Activated CD4-positive, alpha-beta memory T cell treated with anti-CD3 and anti-CD28 coated beads for 36 hours (primary cell): ENCODE measurements at regions of chr7 and their contacts with region 1.

Region 1: DNA sequence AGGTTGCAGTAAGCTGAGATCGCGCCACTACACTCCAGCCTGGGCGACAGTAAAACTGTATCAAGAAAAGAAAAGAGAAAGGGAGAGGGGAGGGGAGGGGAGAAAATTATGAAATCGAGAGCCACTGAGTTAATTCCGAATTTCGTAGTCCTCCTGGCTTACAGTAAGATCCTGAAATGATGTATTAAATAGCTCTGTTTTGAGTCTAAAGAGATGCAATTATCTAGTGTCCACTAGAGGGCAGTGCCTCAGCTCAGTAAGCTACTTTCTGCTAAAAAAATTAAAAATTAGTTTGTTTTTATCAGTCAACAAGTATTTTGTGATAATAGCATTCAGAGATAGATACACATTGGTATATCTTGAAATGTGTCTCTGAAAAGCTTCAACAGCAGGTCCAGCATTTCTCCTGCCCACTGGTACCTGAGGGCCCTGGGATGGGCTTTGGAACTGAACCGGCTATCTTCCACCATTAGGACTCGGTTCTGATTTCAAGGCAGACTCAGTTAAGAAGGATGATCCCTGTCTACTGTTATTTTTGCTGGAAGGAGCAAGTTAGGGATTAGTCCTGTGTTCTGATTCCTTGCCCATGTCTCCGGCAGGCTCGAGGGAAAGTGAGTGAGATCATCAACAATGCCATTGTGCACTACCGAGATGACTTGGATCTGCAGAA is 19.5 kb downstream of the TSPAN33 start:
- DNase-seq: no peak
- H3K4me3 Mint-ChIP-seq: no peak overlapping the region
- H3K27ac Mint-ChIP-seq: no peak overlapping the region
- H3K4me1 Mint-ChIP-seq: peaks cover 7% of the 10 kb centered on the region
- H3K27me3 Mint-ChIP-seq: peaks cover 14% of the 10 kb centered on the region

Region 2: GRCh38 chr7:128281605-128282380 is 882.2 kb before region 1 on chr7:
- CTCF ChIA-PET with region 1: no interaction called
- POLR2A ChIA-PET with region 1: no interaction called
- intact Hi-C with region 1: no loop called
- DNase-seq: no peak
- H3K4me3 Mint-ChIP-seq: no peak overlapping the region
- H3K27ac Mint-ChIP-seq: no peak overlapping the region
- H3K4me1 Mint-ChIP-seq: no peaks in the 10 kb centered on the region
- H3K27me3 Mint-ChIP-seq: no peaks in the 10 kb centered on the region

Region 3: GRCh38 chr7:129066290-129067131 is 97.5 kb before region 1 on chr7:
- CTCF ChIA-PET with region 1: no interaction called
- POLR2A ChIA-PET with region 1: no interaction called
- intact Hi-C with region 1: no loop called
- DNase-seq: no peak
- H3K4me3 Mint-ChIP-seq: no peak overlapping the region
- H3K27ac Mint-ChIP-seq: no peak overlapping the region
- H3K4me1 Mint-ChIP-seq: no peaks in the 10 kb centered on the region
- H3K27me3 Mint-ChIP-seq: peaks cover 5% of the 10 kb centered on the region

Region 4: DNA sequence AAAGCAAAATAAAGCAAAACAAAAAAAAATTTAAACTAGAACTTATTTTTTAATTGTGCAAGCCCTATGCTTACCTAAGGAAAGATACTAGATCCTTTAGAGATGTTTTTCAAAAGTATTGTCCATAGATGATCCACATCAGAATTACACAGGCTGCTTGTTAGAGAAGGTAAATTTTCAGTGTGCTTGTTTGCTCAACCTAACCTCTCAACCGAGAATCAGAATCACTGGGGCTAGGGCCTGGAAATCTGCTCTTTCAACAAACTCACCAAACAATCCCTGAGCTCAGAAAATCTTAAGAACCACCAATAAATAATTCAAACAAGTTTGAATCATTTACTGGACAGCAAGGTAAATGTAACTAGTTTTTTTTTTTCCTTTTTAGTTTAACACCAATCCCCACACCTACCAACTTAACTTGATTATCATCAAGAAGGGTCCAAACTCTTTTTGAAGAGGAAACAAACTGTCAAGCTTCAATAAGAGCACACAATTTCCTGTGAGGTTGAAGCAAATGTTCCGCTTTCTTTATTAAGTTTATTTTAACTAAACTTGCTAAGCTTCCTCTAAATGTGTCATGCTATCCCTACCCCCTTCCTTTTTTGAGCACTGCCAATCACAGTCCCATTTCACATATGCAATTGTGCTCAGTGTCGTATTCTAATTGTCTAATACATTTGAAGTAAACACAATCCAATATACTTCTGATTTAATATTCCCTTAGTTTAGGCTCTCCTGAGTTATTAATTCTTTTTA is 26.9 kb before region 1 on chr7:
- CTCF ChIA-PET with region 1: interaction called, 10 read pairs
- POLR2A ChIA-PET with region 1: no interaction called
- intact Hi-C with region 1: no loop called
- DNase-seq: no peak
- H3K4me3 Mint-ChIP-seq: no peak overlapping the region
- H3K27ac Mint-ChIP-seq: peak overlapping the region; percentile 82
- H3K4me1 Mint-ChIP-seq: peaks cover 23% of the 10 kb centered on the region
- H3K27me3 Mint-ChIP-seq: no peaks in the 10 kb centered on the region

Region 5: DNA sequence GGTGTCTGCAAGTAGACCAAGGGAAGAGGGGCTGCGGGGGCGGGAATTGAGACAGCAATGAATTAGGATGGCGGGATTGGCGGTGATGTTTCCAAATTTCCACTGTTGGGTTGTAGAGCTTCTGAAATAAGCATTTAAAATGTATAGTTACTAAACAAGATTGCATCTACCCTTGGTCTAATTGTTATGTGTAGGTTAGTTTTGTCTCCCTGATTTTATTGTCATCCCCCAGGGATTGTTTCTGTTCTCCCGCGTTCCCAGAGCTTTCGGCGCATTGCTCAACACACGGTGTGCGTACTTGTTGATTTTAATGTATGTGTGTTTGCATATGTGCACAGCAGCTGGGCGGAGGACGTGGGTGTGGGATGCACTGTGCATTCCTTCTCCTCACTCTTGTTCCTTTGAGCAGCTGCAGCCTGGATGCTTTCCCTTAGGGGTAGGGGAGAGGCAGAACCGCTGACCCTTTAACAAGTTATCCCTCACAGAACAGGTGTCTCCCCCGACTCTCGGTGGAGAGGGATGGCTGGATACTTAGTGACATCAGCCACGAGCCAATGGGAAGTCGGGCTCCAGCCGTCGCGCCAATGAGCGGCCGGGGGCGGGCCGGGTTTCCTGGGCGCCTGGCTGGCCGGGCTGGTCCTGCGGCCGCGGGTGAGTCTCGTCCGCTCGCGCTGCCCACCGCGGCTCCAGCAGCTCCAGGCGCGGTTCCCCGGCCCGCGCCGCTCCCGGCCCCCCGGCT is 19.7 kb before region 1 on chr7 and contains the start of gene TSPAN33:
- CTCF ChIA-PET with region 1: interaction called, 24 read pairs
- POLR2A ChIA-PET with region 1: no interaction called
- intact Hi-C with region 1: no loop called
- DNase-seq: peak; percentile 78
- H3K4me3 Mint-ChIP-seq: peak within 1 kb of the TSS; percentile 87
- H3K27ac Mint-ChIP-seq: no peak within 1 kb of the TSS
- H3K4me1 Mint-ChIP-seq: peaks cover 11% of the 10 kb centered on the region
- H3K27me3 Mint-ChIP-seq: peaks cover 26% of the 10 kb centered on the region
- total RNA-seq, gene TSPAN33: 3.3 to 4.1 TPM

Region 6: DNA sequence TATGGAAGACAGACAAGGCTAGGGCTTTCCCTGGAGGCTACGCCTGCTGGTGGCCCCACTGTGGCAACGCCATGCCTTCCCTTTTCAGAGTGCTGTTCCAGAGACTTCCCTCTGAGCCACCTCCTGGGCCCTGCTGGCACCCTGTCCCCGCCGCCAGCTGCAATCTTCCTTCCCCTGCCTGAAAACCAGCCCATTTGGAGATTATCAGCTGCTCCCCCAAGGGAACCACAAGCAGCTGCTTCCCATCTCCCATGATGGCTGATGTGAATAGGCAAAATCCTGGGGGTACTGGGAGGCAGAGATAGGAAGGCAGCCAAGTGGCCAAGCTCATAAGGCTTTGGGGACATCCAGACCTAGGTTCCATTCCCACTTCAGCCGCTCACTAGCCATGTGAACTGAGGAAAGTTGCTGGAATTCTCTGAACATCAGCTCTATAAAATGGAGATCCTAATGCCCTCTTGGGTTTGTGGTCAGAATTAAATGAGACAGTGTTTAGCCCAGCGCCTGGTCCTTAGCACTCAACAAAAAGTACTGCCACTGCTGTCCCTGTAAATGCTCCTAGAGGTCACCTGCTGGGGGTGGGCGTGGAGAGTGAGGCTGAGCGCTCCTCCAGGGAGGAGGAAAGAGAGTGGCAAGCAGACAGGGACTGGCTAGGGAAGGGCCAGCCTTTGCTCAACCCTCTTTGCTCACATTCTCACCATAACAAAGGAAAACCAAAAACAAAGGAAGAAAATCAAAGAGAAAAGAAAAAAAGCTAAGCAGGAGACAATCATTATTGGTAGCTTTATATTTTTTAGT is 13.6 kb before region 1 on chr7:
- CTCF ChIA-PET with region 1: interaction called, 24 read pairs
- POLR2A ChIA-PET with region 1: no interaction called
- intact Hi-C with region 1: no loop called
- DNase-seq: no peak
- H3K4me3 Mint-ChIP-seq: no peak overlapping the region
- H3K27ac Mint-ChIP-seq: no peak overlapping the region
- H3K4me1 Mint-ChIP-seq: no peaks in the 10 kb centered on the region
- H3K27me3 Mint-ChIP-seq: peaks cover 13% of the 10 kb centered on the region

Region 7: DNA sequence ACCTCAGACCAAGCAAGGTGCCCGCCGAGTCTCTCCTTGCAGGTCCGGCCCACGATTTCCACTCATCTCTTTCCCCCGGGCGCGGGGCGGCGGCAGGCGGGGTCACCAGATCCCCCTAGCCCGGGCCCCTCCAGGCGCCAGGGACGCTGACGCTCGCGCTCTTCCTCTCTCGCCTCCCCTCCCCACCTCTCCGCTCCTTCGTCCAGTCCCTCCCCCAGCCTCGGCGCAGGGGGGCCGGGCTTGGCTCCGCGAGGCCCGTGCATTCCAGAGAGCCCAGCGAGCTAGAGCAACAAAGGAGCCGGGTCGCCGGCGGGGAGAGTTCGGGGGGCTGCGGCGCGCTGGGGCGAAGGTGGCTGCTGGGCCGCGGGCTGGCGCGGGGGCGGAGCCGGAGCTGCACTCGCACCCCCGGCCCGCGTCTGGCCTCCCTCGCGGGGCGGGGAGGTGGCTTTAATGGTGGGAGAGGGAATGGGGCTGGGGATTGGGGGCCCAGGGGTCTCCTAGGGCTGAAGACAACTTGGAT is 24.4 kb after region 1 on chr7 and contains the start of gene SMO:
- CTCF ChIA-PET with region 1: interaction called, 20 read pairs
- POLR2A ChIA-PET with region 1: no interaction called
- intact Hi-C with region 1: no loop called
- DNase-seq: no peak
- H3K4me3 Mint-ChIP-seq: peak within 1 kb of the TSS; percentile 56
- H3K27ac Mint-ChIP-seq: no peak within 1 kb of the TSS
- H3K4me1 Mint-ChIP-seq: peaks cover 8% of the 10 kb centered on the region
- H3K27me3 Mint-ChIP-seq: peaks cover 48% of the 10 kb centered on the region
- total RNA-seq, gene SMO: 0.12 to 0.21 TPM

Region 8: DNA sequence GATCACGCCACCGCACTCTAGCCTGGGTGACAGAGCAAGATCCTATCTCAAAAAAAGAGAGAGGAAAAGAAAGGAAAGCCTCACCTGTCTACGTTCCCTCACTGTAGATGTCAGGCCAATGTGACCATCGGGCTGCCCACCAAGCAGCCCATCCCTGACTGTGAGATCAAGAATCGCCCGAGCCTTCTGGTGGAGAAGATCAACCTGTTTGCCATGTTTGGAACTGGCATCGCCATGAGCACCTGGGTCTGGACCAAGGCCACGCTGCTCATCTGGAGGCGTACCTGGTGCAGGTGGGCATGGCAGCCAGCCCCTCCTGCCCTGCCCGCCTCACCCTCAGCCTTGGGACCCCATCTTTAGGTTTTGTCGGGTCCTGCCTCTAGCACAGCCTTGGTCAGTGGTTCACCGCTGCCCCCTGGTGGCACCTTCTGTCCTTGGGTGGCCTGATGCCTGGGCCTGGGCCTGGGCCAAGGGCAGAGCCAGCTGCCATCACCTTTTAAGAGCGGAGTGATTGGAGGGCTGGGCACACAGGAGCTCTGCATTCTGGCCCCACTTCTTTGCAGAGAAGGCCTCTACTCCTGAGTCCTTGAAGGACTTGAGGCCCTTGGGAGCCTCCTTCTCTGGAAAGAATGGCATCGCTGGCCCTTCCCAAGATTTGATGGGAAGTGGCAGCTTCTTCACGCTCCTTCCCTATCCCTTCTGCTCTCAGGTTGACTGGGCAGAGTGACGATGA is 46.4 kb after region 1 on chr7:
- CTCF ChIA-PET with region 1: interaction called, 66 read pairs
- POLR2A ChIA-PET with region 1: no interaction called
- intact Hi-C with region 1: loop called (anchors 1 kb)
- DNase-seq: peak; percentile 82
- H3K4me3 Mint-ChIP-seq: no peak overlapping the region
- H3K27ac Mint-ChIP-seq: no peak overlapping the region
- H3K4me1 Mint-ChIP-seq: no peaks in the 10 kb centered on the region
- H3K27me3 Mint-ChIP-seq: peaks cover 4% of the 10 kb centered on the region